ENCODE measurements at regions of chr5 and their contacts with region 1.

Region 1: GRCh38 chr5:134577796-134578363 is 52.4 kb downstream of the JADE2 start:
- DNase-seq: peak; percentile 88
- H3K4me3 Mint-ChIP-seq: no peak overlapping the region
- H3K27ac Mint-ChIP-seq: peak overlapping the region; percentile 75
- H3K4me1 Mint-ChIP-seq: peaks cover 24% of the 10 kb centered on the region
- H3K27me3 Mint-ChIP-seq: no peaks in the 10 kb centered on the region
- CTCF ChIP-seq: peak; percentile 96

Region 2: GRCh38 chr5:134296213-134296612 is 281.7 kb before region 1 on chr5:
- CTCF ChIA-PET with region 1: interaction called, 15 read pairs
- POLR2A ChIA-PET with region 1: interaction called, 4 read pairs
- intact Hi-C with region 1: no loop called
- DNase-seq: no peak
- H3K4me3 Mint-ChIP-seq: no peak overlapping the region
- H3K27ac Mint-ChIP-seq: no peak overlapping the region
- H3K4me1 Mint-ChIP-seq: no peaks in the 10 kb centered on the region
- H3K27me3 Mint-ChIP-seq: peaks cover 2% of the 10 kb centered on the region
- CTCF ChIP-seq: no peak

Region 3: DNA sequence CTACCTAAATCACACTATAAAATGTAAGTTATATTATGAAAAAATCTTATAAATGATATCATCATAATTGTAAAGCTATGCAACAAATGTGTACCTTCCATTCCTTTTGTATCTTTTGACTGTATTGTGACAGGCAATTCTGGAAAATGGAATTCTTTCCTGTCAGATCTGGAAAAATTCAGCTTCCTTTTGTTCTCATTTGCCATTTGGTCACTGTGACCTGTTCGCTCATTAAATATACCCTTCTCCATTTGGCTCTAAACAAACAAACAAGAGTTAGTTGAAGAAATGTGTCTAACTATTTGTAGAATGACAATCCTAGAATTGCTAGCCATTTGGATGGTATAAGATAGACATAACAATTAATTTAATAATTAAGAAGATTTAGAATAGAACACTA is 273.6 kb before region 1 on chr5:
- CTCF ChIA-PET with region 1: interaction called, 23 read pairs
- POLR2A ChIA-PET with region 1: interaction called, 3 read pairs
- intact Hi-C with region 1: loop called (anchors 1 kb)
- DNase-seq: no peak
- H3K4me3 Mint-ChIP-seq: no peak overlapping the region
- H3K27ac Mint-ChIP-seq: no peak overlapping the region
- H3K4me1 Mint-ChIP-seq: no peaks in the 10 kb centered on the region
- H3K27me3 Mint-ChIP-seq: no peaks in the 10 kb centered on the region
- CTCF ChIP-seq: no peak

Region 4: DNA sequence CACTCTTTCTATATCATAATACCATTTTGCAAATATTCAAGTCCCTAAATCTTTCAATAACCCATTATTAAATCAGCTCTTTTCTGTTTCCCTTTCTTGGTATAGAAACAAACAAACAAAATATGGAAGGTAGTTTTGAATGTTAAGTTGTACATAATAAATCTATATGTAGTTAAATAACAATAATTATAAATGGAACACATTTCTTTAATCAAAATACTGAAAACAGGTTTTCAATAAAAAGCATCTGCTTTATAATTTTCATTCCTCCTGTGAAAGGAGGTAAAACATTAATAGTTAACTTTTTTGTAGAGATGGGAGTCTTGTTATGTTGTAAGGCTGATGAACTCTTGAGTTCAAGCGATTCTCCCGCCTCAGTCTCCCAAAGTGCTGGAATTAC is 265.1 kb before region 1 on chr5:
- CTCF ChIA-PET with region 1: interaction called, 17 read pairs
- POLR2A ChIA-PET with region 1: no interaction called
- intact Hi-C with region 1: no loop called
- DNase-seq: no peak
- H3K4me3 Mint-ChIP-seq: no peak overlapping the region
- H3K27ac Mint-ChIP-seq: no peak overlapping the region
- H3K4me1 Mint-ChIP-seq: no peaks in the 10 kb centered on the region
- H3K27me3 Mint-ChIP-seq: no peaks in the 10 kb centered on the region
- CTCF ChIP-seq: no peak

Region 5: DNA sequence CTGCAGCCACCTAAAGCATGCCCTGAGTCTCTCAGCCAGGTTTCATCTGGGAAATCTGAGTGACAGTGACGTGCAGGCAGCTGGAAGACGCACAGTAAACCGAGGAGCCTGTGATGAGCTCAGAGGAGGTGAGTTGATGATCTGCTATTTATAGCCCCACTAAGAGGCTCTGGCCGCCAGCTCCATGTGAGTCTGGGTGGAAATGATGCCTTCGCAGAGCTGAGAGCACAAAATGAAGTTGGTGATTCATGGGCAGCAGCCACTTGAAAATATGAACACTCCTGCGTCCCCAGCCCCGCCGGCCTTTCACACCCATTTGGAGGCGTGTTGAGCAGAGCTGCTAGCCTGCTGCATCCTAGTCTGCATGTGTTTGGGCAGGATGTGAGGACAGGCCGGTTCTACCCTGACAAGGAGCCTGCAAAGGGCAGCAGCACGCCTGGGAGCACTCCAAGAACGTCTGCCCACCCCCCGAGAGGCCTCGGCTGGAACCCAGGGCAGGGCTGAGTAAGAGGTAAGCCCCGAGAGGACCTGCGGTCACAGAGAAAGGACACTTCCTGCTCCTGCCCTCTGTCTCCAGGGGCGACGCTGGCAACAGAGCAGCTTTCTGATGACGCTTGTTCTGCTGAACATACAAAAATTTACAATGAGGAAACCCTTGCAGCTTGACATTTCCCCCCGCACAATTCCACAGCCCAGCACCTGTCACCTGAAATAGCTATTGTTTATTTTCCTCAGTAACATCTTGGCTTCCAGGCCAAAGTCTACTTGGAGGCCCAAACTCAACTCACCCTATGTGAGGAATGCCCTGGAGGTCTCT is 141.1 kb before region 1 on chr5:
- CTCF ChIA-PET with region 1: no interaction called
- POLR2A ChIA-PET with region 1: no interaction called
- intact Hi-C with region 1: loop called (anchors 2 kb)
- DNase-seq: peak; percentile 96
- H3K4me3 Mint-ChIP-seq: peak overlapping the region; percentile 63
- H3K27ac Mint-ChIP-seq: peak overlapping the region; percentile 98
- H3K4me1 Mint-ChIP-seq: peaks cover 72% of the 10 kb centered on the region
- H3K27me3 Mint-ChIP-seq: no peaks in the 10 kb centered on the region
- CTCF ChIP-seq: no peak

Region 6: DNA sequence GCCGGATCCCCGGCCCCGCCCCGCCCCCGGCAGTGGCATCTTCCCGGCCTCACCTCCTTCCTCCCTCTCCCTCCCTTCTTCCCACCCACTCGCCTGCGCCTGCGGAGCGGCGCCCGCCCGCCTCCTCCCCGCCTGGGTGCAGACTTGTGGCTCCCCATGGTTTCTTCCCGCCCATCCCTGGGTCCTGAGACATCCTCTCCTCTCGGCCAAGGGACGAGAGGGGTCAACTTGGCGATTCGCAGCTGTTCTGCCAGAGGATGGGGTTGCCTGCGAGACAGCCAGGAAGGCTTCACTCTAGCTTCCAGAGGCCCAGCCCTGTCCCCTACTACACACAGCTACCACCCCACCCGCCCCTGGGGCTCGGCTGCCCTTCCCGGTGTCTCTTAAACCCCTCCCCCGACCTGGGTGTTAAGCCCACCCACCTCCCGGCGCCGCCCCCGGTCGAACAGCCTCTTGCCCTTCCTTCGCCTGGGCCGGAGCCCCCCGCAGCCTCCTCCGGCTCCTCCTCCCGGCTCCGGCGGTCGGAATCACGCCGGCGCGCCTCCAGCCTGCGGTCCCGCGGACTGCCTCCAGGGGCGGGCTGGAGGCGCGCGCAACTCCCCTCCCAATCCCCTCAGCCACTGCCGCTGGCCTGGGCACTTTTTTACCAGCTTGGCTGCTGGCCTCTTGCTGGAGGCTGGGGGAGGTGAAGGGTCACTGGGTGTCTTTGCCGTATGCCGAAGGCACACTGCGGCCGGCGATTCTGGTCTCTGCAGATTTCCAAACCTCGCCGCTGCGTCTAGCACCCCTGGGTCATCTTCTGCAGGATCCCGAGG is 50.5 kb before region 1 on chr5:
- CTCF ChIA-PET with region 1: interaction called, 32 read pairs
- POLR2A ChIA-PET with region 1: interaction called, 8 read pairs
- intact Hi-C with region 1: loop called (anchors 1 kb)
- DNase-seq: peak; percentile 93
- H3K4me3 Mint-ChIP-seq: peak overlapping the region; percentile 91
- H3K27ac Mint-ChIP-seq: peak overlapping the region; percentile 49
- H3K4me1 Mint-ChIP-seq: peaks cover 50% of the 10 kb centered on the region
- H3K27me3 Mint-ChIP-seq: no peaks in the 10 kb centered on the region
- CTCF ChIP-seq: peak; percentile 94

Region 7: DNA sequence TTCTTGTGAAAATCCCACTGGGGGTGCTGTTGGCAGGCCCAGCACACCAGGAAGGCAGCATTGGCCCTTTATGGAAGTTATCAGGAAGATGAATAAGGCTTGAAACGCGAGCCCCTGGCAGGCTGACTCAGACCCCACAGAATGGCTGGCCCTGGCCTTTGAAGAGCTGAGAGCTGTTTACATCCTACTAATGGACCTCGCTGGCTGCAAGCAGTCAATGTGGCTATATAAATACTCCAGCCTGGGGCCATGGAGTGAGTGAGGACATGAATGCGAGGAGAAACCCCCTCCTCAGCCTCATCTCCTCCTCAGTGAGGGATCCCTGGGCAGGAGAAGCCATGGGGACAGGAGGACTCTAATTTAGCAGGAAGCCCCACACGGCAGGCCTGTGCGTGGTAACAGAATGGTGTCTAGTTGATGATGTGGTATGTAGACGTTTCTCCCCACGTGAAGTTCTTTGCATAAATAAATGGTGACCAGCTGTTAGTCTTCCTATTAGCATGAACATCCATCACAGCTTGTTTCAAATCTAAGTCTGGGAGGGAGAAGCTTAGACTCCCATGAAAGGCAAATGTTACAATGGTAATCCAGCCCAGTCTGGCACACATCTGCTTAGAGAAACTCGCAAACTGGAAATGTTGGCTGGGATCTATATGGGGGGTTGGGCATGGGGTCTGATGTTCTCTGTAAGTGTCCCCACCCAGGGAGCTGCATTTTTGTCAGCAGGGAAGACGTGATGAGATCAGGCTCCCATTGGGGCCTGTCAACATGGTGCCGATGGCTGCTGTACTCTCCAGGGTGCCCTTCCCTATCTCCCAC is 631.2 kb after region 1 on chr5:
- CTCF ChIA-PET with region 1: no interaction called
- POLR2A ChIA-PET with region 1: no interaction called
- intact Hi-C with region 1: loop called (anchors 10 kb)
- DNase-seq: peak; percentile 90
- H3K4me3 Mint-ChIP-seq: no peak overlapping the region
- H3K27ac Mint-ChIP-seq: peak overlapping the region; percentile 8
- H3K4me1 Mint-ChIP-seq: peaks cover 14% of the 10 kb centered on the region
- H3K27me3 Mint-ChIP-seq: no peaks in the 10 kb centered on the region
- CTCF ChIP-seq: no peak

Measured in MCF 10A (cell line).